ENCODE measurements at regions of chr1 and their contacts with region 1.

Region 1: DNA sequence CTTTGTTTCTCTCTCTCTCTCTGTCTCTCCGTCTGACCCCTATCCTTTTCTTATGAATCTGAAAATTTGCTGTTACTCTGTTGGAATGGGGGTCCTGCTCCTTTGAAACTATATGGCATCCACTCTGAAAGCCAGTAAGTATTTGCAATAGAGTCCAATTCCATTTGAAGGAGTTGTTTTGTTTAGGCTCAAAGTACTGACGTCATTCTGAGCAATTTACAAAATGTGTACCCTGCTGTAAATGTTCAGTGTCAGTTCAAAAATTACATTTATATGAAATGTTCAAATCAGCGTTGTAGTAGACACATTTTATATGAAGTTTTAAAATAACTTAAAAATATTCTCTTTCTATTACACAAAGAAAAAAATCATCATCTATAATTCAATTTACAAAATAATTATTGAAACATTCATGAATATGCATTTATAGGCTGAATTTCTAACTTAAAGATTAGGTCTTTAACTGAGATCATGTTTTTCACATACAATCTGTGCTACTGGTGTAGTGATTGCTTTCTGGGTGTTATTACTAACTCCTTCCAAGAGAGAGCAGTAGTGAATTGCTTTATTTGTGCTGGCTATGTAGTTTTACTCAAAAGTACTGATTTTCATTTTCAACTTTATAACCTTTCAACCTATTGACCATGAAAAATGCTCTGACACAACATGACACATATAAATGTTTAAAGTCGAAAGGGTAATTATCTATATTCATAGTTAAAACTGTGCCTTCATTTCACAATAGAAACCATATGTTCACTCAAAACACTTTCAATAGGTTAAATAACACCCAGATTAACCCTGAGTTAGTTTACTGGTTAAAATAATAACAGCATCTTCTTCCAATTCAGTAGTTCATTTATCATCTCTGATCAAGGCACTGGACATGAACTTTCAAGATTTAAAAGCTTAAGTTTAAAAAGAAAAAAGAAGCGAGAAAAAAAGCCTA is 253.1 kb upstream of the ADGRL4 start:
- DNase-seq: no peak
- H3K4me3 Mint-ChIP-seq: no peak overlapping the region
- H3K27ac Mint-ChIP-seq: no peak overlapping the region
- H3K4me1 Mint-ChIP-seq: peaks cover 9% of the 10 kb centered on the region
- H3K27me3 Mint-ChIP-seq: no peaks in the 10 kb centered on the region
- CTCF ChIP-seq: peak; percentile 20

Region 2: GRCh38 chr1:79478160-79478559 is 218.5 kb after region 1 on chr1:
- CTCF ChIA-PET with region 1: interaction called, 3 read pairs
- intact Hi-C with region 1: loop called (anchors 5 kb)
- DNase-seq: no peak
- H3K4me3 Mint-ChIP-seq: no peak overlapping the region
- H3K27ac Mint-ChIP-seq: no peak overlapping the region
- H3K4me1 Mint-ChIP-seq: no peaks in the 10 kb centered on the region
- H3K27me3 Mint-ChIP-seq: no peaks in the 10 kb centered on the region
- CTCF ChIP-seq: no peak

Region 3: GRCh38 chr1:79497193-79497773 is 237.6 kb after region 1 on chr1:
- CTCF ChIA-PET with region 1: no interaction called
- intact Hi-C with region 1: loop called (anchors 5 kb)
- DNase-seq: peak; percentile 65
- H3K4me3 Mint-ChIP-seq: no peak overlapping the region
- H3K27ac Mint-ChIP-seq: no peak overlapping the region
- H3K4me1 Mint-ChIP-seq: no peaks in the 10 kb centered on the region
- H3K27me3 Mint-ChIP-seq: no peaks in the 10 kb centered on the region
- CTCF ChIP-seq: peak; percentile 72